Activated CD4-positive, alpha-beta T cell treated with anti-CD3 and anti-CD28 coated beads, Interleukin-2, amount 10 ng/mL, durations not matched to agents 24 days and 14 days (primary cell): ENCODE measurements at regions of chr3 and their contacts with region 1.

Region 1: DNA sequence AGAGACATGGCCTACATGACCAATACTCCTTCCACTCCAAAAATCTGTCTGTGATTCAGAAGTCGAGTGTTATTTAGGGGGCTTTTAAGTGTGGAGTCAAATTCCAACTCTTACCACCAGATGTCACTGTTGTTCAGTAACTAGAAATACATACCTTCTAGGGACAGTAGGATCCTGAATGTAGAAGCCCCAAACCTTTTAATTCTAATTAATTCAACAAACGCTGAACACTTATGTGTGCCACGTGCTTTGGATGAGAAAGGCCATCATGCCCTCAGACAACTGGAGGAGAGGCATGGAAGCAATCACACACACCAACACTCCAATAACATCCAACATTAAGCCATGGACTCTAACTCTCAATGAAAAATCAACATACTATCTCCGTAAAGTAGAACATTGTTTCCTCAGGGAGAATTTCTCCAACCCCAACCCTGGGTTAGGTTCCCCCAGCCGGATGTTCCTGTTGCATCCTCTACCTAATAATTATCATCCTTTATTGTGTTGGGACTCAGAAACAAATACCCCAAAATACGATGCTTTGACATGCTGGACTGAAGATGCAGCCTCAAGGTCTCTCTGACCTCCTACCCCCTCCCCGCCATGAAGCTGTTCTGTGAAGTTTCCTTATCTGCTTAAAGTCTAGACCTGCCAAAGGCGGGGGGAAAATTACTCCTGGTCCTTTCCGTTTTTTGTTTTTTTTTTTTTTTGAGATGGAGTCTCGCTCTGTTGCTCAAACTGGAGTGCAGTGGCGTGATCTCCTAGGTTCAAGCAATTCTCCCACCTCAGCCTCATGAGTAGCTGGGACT is 8.0 kb upstream of the CCDC13 start:
- DNase-seq: peak; percentile 84
- H3K4me3 Mint-ChIP-seq: no peak overlapping the region
- H3K27ac Mint-ChIP-seq: no peak overlapping the region
- H3K4me1 Mint-ChIP-seq: peaks cover 2% of the 10 kb centered on the region
- H3K27me3 Mint-ChIP-seq: no peaks in the 10 kb centered on the region

Region 2: GRCh38 chr3:41900265-41900664 is 880.8 kb before region 1 on chr3:
- intact Hi-C with region 1: no loop called
- DNase-seq: no peak
- H3K4me3 Mint-ChIP-seq: no peak overlapping the region
- H3K27ac Mint-ChIP-seq: no peak overlapping the region
- H3K4me1 Mint-ChIP-seq: peaks cover 2% of the 10 kb centered on the region
- H3K27me3 Mint-ChIP-seq: no peaks in the 10 kb centered on the region

Region 3: DNA sequence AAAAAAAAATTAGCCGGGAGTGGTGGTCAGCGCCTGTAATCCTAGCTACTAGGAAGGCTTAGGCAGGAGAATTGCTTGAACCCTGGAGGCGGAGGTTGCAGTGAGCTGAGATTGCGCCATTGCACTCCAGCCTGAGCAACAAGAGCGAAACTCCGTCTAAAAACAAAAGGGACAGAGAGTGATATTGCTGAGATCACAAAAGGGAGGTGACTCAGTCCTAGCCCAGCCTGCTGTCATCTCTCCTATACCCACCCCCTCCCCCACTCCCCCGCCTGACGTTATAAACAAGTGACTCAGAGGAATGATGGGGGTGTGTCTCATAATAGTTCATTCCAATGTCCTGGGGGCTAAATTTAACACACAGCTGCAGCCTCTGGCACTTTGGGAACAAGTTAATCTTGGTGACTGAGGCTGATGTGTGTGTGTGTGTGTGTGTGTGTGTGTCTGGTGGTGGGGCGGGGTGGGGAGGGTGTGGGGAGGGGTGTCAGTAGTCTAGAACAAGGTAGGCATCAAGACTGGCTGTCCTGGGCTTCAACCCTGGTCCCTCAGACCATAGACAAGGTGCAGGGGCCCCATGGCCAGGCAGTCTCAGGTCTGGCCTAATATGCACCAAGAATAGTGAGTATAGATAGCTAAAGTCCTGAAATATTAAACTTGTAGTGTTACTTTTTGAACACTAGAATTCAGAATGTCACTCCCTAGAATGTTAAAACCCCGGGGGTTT is 97.1 kb before region 1 on chr3:
- intact Hi-C with region 1: no loop called
- DNase-seq: no peak
- H3K4me3 Mint-ChIP-seq: no peak overlapping the region
- H3K27ac Mint-ChIP-seq: no peak overlapping the region
- H3K4me1 Mint-ChIP-seq: peaks cover 2% of the 10 kb centered on the region
- H3K27me3 Mint-ChIP-seq: peaks cover 10% of the 10 kb centered on the region

Region 4: DNA sequence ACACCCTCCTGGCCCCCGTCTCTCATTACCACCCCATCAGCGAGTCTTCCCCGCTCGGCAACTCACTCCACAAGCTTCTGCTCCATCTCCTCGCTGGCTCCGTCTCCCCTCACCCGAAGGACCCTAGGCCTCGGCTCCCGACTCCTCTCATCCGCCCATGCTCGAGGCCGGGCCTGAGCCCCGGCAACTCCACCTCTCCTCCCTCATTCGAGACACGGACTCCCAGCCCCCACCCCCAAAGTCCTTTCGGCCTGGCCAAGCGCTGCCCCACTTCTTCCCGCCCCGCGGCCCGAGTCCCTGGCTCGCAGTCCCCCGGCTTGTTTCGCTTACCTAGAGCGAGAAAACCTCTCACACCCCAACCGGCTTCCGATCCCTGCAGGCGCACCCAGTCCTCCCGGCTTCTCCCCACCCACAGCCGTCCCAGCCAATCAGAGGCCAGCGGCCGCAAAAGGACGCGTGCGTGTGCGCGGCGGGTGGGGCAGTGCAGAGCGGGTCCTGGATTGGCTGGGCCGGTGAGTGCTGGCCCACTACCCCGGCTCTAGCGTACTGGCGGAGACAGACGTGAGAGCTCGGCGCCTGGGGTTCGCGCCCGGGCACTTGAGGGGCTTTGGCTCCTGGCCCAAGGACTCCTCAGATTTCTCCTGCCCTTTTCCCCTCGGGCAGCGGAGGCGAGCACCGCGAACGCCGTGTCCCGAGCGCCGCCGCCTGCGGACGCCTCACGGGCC is 23.2 kb after region 1 on chr3 and contains the start of gene HIGD1A:
- intact Hi-C with region 1: loop called (anchors 2 kb)
- DNase-seq: peak; percentile 98
- H3K4me3 Mint-ChIP-seq: peak within 1 kb of the TSS; percentile 99
- H3K27ac Mint-ChIP-seq: peak within 1 kb of the TSS; percentile 97
- H3K4me1 Mint-ChIP-seq: peaks cover 29% of the 10 kb centered on the region
- H3K27me3 Mint-ChIP-seq: peaks cover 34% of the 10 kb centered on the region
- total RNA-seq, gene HIGD1A: 88.6 and 91.6 TPM in 2 replicates

Region 5: DNA sequence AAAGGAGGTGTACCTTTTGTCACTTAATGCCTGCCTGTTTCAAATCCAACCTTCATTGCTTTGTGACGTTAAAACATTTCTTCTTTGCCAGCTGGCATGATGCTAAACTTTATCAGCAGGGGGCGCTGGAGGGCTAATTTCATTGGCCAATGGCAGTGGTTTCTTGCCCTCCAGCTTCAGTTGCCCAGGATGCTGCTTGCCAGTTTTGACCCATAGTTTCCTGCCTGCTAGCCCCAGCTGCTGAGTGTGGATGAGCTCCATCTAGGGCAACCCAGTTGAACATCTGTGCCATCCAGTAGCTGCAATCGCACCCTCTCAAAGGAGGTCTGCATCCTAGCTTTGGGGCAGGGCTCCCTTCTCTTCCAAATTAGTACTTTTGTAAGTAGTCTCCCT is 50.2 kb after region 1 on chr3:
- intact Hi-C with region 1: loop called (anchors 2 kb)
- DNase-seq: peak; percentile 93
- H3K4me3 Mint-ChIP-seq: no peak overlapping the region
- H3K27ac Mint-ChIP-seq: no peak overlapping the region
- H3K4me1 Mint-ChIP-seq: peaks cover 9% of the 10 kb centered on the region
- H3K27me3 Mint-ChIP-seq: peaks cover 17% of the 10 kb centered on the region

Region 6: DNA sequence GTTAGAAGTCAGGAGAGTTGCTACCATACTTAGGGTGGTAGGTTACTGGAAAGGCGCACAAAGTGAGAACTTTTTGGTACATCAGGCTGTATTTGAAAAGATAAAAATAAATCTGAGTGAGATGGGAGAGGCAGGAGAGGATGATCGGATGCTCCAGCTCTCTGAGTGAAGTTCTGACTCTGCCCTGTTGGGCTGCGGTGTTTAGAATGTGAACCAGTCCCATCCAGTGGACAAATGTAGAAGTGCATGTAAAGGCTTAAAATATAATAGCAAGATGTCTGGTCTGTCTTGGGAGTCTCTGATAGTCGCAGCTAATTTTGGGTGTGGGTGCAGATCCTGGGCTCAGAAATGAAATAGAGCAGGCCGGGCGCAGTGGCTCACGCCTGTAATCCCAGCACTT is 58.5 kb after region 1 on chr3:
- intact Hi-C with region 1: loop called (anchors 2 kb)
- DNase-seq: peak; percentile 78
- H3K4me3 Mint-ChIP-seq: no peak overlapping the region
- H3K27ac Mint-ChIP-seq: no peak overlapping the region
- H3K4me1 Mint-ChIP-seq: no peaks in the 10 kb centered on the region
- H3K27me3 Mint-ChIP-seq: no peaks in the 10 kb centered on the region

Region 7: GRCh38 chr3:42880601-42881451 is 99.7 kb after region 1 on chr3:
- intact Hi-C with region 1: loop called (anchors 1 kb)
- DNase-seq: peak; percentile 96
- H3K4me3 Mint-ChIP-seq: peak overlapping the region; percentile 87
- H3K27ac Mint-ChIP-seq: peak overlapping the region; percentile 85
- H3K4me1 Mint-ChIP-seq: peaks cover 11% of the 10 kb centered on the region
- H3K27me3 Mint-ChIP-seq: peaks cover 12% of the 10 kb centered on the region